Activated CD8-positive, alpha-beta T cell treated with anti-CD3 and anti-CD28 coated beads for 36 hours (primary cell): ENCODE measurements at regions of chr1 and their contacts with region 1.

Region 1: GRCh38 chr1:119808972-119809550 is 2.2 kb downstream of the REG4 start:
- DNase-seq: peak; percentile 85
- ATAC-seq: peak; percentile 97
- H3K4me3 Mint-ChIP-seq: no peak overlapping the region
- H3K27ac Mint-ChIP-seq: no peak overlapping the region
- H3K4me1 Mint-ChIP-seq: no peaks in the 10 kb centered on the region
- H3K27me3 Mint-ChIP-seq: peaks cover 5% of the 10 kb centered on the region
- CTCF ChIP-seq: peak; percentile 91

Region 2: GRCh38 chr1:119531624-119532323 is 277.3 kb before region 1 on chr1:
- CTCF ChIA-PET with region 1: no interaction called
- POLR2A ChIA-PET with region 1: no interaction called
- intact Hi-C with region 1: no loop called
- DNase-seq: no peak
- ATAC-seq: no peak
- H3K4me3 Mint-ChIP-seq: no peak overlapping the region
- H3K27ac Mint-ChIP-seq: no peak overlapping the region
- H3K4me1 Mint-ChIP-seq: no peaks in the 10 kb centered on the region
- H3K27me3 Mint-ChIP-seq: peaks cover 8% of the 10 kb centered on the region
- CTCF ChIP-seq: no peak

Region 3: GRCh38 chr1:119795261-119796200 is 13.5 kb before region 1 on chr1:
- CTCF ChIA-PET with region 1: interaction called, 20 read pairs
- POLR2A ChIA-PET with region 1: interaction called, 3 read pairs
- intact Hi-C with region 1: no loop called
- DNase-seq: no peak
- ATAC-seq: no peak
- H3K4me3 Mint-ChIP-seq: no peak overlapping the region
- H3K27ac Mint-ChIP-seq: no peak overlapping the region
- H3K4me1 Mint-ChIP-seq: peaks cover 31% of the 10 kb centered on the region
- H3K27me3 Mint-ChIP-seq: no peaks in the 10 kb centered on the region
- CTCF ChIP-seq: no peak

Region 4: GRCh38 chr1:119827010-119827409 is 17.9 kb after region 1 on chr1:
- CTCF ChIA-PET with region 1: interaction called, 18 read pairs
- POLR2A ChIA-PET with region 1: no interaction called
- intact Hi-C with region 1: no loop called
- DNase-seq: no peak
- ATAC-seq: no peak
- H3K4me3 Mint-ChIP-seq: no peak overlapping the region
- H3K27ac Mint-ChIP-seq: no peak overlapping the region
- H3K4me1 Mint-ChIP-seq: no peaks in the 10 kb centered on the region
- H3K27me3 Mint-ChIP-seq: peaks cover 10% of the 10 kb centered on the region
- CTCF ChIP-seq: peak; percentile 53

Region 5: DNA sequence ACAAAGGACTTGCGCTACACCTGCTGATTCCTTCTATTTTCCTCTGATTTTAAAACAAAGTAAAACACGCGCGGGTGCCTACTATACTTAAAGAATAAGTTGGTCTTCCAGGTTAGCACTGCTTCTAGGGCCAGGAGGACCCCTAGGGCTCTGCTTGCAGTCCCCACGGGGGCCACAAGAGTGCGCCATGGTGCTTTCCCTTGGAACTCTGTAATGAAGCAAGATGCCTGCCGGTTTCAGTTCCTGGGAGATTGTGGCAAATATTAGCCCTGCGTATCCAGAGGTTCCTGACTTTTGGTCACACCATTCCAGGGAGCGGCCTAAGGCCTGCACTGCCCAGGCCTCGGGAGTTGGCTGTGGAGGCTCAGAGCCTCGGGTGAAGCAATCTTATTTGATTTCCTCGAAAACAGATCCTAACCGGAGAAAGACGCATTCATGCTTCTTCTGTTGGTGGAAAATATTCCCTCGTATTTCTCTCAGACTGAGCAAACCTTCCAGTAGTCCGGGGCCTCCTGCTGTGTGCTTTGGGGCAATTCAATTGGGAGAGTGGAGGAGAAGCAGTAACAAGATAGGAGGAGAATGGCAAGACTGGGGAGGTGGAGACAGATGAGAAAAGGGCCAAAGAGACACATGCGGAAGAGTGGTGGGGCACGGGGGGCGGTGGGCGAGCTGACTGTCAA is 62.0 kb after region 1 on chr1:
- CTCF ChIA-PET with region 1: interaction called, 18 read pairs
- POLR2A ChIA-PET with region 1: no interaction called
- intact Hi-C with region 1: no loop called
- DNase-seq: peak; percentile 84
- ATAC-seq: peak; percentile 81
- H3K4me3 Mint-ChIP-seq: no peak overlapping the region
- H3K27ac Mint-ChIP-seq: no peak overlapping the region
- H3K4me1 Mint-ChIP-seq: peaks cover 3% of the 10 kb centered on the region
- H3K27me3 Mint-ChIP-seq: peaks cover 9% of the 10 kb centered on the region
- CTCF ChIP-seq: peak; percentile 92